AG04449 (cell line): ENCODE measurements at regions of chr10 and their contacts with region 1.

Region 1: DNA sequence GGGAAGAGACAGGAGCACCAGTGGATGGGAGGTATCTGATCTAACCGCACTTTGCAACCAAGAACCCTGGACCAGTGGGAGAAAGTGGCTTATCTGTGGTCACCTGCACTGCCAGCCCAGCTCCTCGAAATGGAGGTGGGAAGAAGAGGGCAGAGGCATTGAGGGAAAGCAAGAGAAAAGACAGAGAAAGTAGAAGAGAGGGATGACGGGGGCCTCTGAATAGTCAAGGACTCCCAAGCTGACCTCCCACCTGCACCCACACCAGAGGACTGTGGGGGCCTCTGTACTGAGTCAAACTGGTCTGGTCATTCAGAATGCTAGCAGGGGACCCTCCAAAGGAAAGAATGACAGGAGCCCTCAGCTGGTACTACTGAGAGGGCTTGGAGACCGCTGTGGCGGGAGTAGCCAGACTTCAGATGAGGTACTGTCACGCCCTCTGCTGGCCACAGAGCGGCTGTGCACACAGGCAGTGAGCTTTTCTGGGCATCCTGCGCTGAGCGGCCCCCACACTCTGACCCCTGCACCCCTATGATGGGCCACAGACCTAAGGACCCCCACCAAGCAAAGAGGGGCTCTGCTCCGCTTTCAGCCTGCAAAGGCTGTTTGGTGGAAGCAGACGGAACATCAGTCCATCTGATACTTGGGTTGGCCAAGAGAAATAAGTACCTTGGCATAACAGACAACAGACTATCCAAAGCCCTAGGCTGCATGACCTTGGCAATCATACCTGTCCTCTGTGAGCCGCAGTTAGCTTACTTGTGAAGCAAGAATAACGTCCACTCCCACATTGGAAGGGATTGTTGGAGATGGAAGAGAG is 112.9 kb downstream of the COL13A1 start:
- DNase-seq: no peak
- H3K4me3 ChIP-seq: no peak overlapping the region
- CTCF ChIP-seq: peak; percentile 96

Region 2: GRCh38 chr10:69696073-69696731 is 218.4 kb before region 1 on chr10:
- CTCF ChIA-PET with region 1: interaction called, 11 read pairs
- POLR2A ChIA-PET with region 1: no interaction called
- DNase-seq: peak; percentile 79
- H3K4me3 ChIP-seq: no peak overlapping the region
- CTCF ChIP-seq: peak; percentile 49

Region 3: DNA sequence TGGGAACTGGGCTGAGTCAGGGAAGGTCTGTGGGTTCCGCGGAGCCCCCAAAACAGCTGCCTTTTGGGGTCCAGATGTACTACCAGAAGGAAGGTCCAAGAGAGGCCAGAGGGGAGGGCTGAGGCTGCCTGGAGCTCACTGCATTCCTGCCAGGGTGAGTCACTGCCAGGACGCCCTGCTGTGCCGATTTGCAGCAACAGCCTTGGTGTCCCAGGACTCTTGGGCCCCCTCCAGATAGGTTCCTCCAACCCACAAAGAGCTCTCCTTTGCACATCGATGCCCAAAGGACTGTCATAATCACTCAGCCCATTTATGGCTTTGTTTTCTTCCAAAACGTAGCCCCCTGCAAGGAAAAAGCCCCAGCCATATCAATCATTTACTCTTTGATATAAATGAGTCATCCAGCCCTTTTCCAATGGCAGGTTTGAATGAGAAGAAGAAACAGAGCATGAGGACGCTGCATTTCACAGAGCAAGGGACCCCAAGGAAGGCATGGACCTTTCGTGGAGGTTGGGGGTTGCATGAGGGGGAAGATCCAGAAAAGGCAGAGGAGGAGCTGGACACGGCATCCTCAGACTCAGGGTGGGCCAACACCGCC is 145.1 kb before region 1 on chr10:
- CTCF ChIA-PET with region 1: interaction called, 13 read pairs
- POLR2A ChIA-PET with region 1: no interaction called
- DNase-seq: peak; percentile 31
- H3K4me3 ChIP-seq: no peak overlapping the region
- CTCF ChIP-seq: no peak

Region 4: DNA sequence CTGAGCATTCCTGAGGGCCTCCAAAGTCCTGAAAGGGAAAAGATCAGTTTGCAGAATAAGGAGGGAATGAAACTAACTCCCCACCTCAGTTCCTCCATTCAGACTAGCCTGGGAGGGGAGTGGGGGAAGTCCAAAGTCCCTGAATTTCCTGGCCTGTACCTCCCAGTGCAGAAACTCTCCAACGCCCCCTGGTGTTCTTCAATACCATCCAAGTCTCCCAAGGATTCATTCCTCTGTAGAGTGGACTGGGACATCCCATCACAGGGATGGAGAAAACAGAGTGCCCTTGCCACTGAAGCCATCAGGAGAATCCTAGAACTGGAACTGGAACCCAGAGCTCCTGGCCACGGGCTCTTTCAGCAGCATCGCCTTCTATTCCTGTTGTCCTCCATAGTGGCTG is 114.5 kb before region 1 on chr10:
- CTCF ChIA-PET with region 1: interaction called, 638 read pairs
- POLR2A ChIA-PET with region 1: no interaction called
- DNase-seq: peak; percentile 7
- H3K4me3 ChIP-seq: no peak overlapping the region
- CTCF ChIP-seq: peak; percentile 83

Region 5: GRCh38 chr10:69878038-69878437 is 36.6 kb before region 1 on chr10:
- CTCF ChIA-PET with region 1: interaction called, 20 read pairs
- POLR2A ChIA-PET with region 1: no interaction called
- DNase-seq: no peak
- H3K4me3 ChIP-seq: no peak overlapping the region
- CTCF ChIP-seq: no peak

Region 6: GRCh38 chr10:69929575-69929974 is 15.0 kb after region 1 on chr10:
- CTCF ChIA-PET with region 1: interaction called, 33 read pairs
- POLR2A ChIA-PET with region 1: no interaction called
- DNase-seq: no peak
- H3K4me3 ChIP-seq: no peak overlapping the region
- CTCF ChIP-seq: no peak

Region 7: DNA sequence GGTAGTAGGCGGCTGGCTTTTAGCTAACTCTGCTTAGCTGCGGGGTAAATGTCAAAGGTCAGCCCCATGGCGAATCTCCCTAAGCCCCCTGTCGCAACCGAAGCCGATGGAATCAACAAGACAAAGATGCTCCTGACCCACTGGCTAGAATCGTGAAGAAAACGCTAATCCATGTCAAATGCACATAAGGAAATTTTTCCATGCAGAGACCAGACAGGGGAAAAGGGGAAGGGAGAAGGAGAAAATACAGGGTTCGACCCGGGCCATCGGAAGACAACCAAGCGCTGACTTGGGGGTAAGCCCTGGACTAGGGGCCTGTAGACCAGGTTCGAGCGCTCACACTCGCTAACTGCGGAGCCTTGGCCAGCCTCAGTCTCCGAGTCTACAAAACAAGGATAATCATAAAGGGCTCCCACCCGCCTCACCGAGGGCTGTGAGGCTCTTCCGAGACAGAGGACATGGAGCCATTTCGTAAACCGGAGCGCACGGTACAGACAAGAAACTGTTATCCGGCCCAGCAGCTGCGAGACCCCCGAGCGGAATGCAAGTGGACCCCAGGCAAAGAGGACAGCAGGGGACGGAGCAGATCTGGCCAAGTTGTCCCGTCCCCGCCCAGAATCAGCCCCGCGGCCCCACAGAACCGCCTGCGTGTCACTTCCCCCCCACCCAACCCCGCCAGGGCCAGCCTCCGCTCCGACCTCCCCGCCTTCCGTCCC is 255.2 kb after region 1 on chr10:
- CTCF ChIA-PET with region 1: no interaction called
- POLR2A ChIA-PET with region 1: no interaction called
- DNase-seq: no peak
- H3K4me3 ChIP-seq: peak overlapping the region; percentile 95
- CTCF ChIP-seq: no peak

Region 8: DNA sequence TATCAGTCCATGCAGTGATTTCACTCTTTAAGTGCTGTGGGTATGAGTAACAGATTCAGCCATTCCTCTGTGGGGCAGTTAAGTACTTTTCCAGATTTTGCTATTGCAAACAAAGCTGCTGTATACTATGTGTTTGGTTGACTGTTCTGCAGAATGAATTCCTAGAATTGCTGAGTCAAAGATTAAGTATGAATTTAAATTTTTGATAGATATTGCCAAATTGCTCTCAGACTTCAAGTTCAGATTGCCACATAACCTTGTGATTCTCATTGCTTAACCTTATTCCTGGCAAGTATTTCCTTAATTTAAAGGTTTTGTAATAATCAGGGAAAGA is 277.3 kb after region 1 on chr10:
- CTCF ChIA-PET with region 1: no interaction called
- POLR2A ChIA-PET with region 1: no interaction called
- DNase-seq: peak; percentile 95
- H3K4me3 ChIP-seq: no peak overlapping the region
- CTCF ChIP-seq: no peak